K562 (cell line): ENCODE measurements at regions of chr5 and their contacts with region 1.

Region 1: DNA sequence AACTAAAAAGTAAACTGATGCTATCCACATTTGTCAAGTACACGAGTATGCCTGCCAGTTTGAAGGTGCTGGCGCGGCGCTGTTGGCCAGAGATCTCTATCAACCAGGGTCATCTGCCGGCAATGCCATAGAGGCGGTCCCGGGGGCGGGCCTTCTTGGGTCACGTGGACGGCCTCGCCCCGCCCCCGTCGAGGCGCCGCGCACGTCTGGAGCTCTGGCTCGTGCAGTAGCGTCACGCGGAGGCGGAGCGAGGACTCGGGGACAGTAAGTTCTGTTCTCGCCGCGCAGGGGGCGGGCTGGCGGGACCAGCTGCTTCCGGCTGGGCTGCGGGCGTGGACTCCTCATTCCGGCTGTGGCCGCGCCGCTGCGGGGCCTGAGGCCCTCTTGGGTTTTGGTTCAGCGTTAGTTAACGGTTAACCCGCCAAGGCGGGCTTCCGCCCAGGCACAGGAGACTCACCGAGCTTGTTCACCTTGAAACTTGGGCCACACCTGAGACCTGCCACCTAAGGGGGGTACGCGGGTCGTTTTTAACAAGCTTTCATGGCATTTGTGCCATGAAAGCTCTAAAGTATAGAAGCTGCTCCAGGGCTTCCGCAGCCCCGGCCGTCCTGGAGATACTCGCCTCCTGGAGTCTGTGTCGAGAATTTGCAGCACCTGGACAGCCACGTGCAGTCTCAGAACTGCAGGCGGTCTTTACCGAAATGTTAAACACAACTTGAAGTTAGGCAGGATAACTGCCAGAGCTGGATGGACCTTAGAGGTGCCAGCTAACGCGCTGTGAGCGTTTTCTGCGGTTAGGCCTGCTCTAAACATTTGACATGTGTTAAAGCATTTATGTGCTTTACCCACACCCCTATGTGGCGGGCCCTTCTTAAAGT is at the start of gene RFESD:
- DNase-seq: peak; percentile 92 to 99 (median 94)
- ATAC-seq: peak; percentile 89
- H3K4me3 ChIP-seq: peak within 1 kb of the TSS; percentile 49
- H3K27ac ChIP-seq: peak within 1 kb of the TSS; percentile 95
- H3K4me1 ChIP-seq: peaks cover 13 to 18% of the 10 kb centered on the region in 2 experiments
- H3K27me3 ChIP-seq: no peaks in the 10 kb centered on the region
- CTCF ChIP-seq: peak in 1 of 3 experiments; percentile 27; a peak in 2 of 6 replicates
- EP300 ChIP-seq: peak; percentile 52; the same call in 1 of the 2 replicates
- POLR2A ChIP-seq: peak; percentile 95
- RAD21 ChIP-seq: no peak; a peak in 2 of 4 replicates
- polyA plus RNA-seq, gene RFESD: 506 to 600 TPM

Region 2: GRCh38 chr5:94968507-94969095 is 678.2 kb before region 1 on chr5:
- CTCF ChIA-PET with region 1: no interaction called
- POLR2A ChIA-PET with region 1: no interaction called
- in situ Hi-C with region 1: no loop called
- intact Hi-C with region 1: loop called (anchors 10 kb)
- DNase-seq: peak; percentile 11 to 61 (median 22)
- ATAC-seq: peak; percentile 93
- H3K4me3 ChIP-seq: no peak overlapping the region
- H3K27ac ChIP-seq: no peak overlapping the region
- H3K4me1 ChIP-seq: no peaks in the 10 kb centered on the region
- H3K27me3 ChIP-seq: no peaks in the 10 kb centered on the region
- CTCF ChIP-seq: peak; percentile 54 to 75 (median 71)
- EP300 ChIP-seq: no peak
- POLR2A ChIP-seq: no peak
- RAD21 ChIP-seq: peak; percentile 67 to 80

Region 3: DNA sequence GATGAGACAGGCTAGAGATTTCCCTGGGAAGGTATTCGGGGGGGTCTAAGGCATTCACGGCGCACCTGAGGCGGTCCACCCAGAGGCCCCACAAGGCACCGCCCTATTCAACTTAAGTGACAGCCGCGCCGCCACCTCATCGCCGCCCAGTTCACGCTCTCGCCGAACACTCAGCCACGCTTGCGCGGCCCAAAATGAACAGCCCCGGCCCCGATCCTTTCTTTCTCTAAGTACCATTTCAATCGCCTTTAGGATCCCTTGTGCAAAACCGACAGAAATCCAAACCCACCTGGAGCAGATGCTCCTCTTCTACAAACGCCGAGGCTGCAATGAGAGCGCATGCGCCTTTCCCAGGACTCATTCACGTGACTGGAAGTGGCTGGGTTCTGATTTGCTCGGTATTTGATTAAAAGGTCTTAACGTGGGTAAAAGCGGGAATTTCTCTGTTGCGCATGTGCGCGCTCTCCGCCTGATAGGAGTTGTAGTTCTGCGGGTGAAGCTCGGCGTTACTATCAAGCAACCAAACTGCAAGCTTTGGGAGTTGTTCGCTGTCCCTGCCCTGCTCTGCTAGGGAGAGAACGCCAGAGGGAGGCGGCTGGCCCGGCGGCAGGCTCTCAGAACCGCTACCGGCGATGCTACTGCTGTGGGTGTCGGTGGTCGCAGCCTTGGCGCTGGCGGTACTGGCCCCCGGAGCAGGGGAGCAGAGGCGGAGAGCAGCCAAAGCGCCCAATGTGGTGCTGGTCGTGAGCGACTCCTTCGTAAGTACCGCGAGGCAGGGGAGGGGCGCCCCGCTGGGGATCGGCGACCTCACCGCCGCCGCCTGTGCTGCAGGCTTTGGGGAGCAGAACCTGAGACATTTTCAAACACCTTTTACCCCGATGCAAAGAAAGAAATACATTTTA is 91.9 kb before region 1 on chr5 and contains the starts of genes ARSK and SKIC3:
- CTCF ChIA-PET with region 1: interaction called, 4 read pairs
- POLR2A ChIA-PET with region 1: interaction called, 4 read pairs
- in situ Hi-C with region 1: no loop called
- intact Hi-C with region 1: loop called (anchors 1 kb)
- DNase-seq: peak; percentile 86 to 98 (median 92)
- ATAC-seq: peak; percentile 92
- H3K4me3 ChIP-seq: peak within 1 kb of the TSS; percentile 66
- H3K27ac ChIP-seq: peak within 1 kb of the TSS; percentile 84
- H3K4me1 ChIP-seq: peaks cover 7 to 15% of the 10 kb centered on the region in 2 experiments; a peak in 4 of 5 replicates
- H3K27me3 ChIP-seq: no peaks in the 10 kb centered on the region
- CTCF ChIP-seq: peak; percentile 23 to 49 (median 31)
- EP300 ChIP-seq: no peak; the same call in 1 of the 2 replicates
- POLR2A ChIP-seq: peak; percentile 91
- RAD21 ChIP-seq: peak; percentile 35 to 40; a peak in 2 of 4 replicates
- polyA plus RNA-seq, gene ARSK: 2.7 to 2.8 TPM
- polyA plus RNA-seq, gene SKIC3: 35.1 to 44.1 TPM

Region 4: DNA sequence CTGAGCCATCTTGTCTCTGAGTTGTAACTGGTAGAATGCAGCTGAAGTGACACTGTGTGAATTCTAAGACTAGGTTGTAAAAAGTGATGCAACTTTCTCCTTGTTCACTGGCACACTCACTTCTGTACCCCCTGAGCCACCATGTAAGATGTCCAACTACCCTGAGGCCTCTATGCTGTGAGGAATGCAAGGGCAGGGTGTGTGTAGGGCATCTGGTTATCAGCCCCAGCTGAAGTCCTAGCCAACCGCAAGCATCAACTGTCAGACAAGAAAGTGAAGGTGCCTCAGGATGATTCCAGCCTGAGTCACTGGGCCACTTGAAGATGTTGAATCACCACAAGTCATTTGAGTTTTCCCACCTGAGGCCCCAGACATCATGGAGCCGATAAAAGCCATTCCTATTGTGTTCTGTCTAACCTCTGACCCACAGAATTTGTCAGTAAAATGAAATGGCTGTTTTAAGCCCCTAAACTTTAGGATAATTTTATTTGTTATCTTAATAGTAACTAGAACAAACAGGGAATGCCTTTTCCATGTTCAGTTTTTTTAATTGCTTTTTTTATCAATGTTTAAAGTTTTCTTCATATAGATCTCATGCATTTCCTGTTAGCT is 65.7 kb after region 1 on chr5:
- CTCF ChIA-PET with region 1: no interaction called
- POLR2A ChIA-PET with region 1: interaction called, 3 read pairs
- in situ Hi-C with region 1: no loop called
- intact Hi-C with region 1: loop called (anchors 5 kb)
- DNase-seq: peak; percentile 82 to 97 (median 87)
- ATAC-seq: peak; percentile 87
- H3K4me3 ChIP-seq: peak overlapping the region; percentile 51; the same call in 1 of the 2 replicates
- H3K27ac ChIP-seq: peak overlapping the region; percentile 99
- H3K4me1 ChIP-seq: peaks cover 25 to 63% of the 10 kb centered on the region in 2 experiments
- H3K27me3 ChIP-seq: no peaks in the 10 kb centered on the region
- CTCF ChIP-seq: no peak
- EP300 ChIP-seq: peak; percentile 100
- POLR2A ChIP-seq: peak; percentile 83
- RAD21 ChIP-seq: peak in 1 of 2 experiments; percentile 37; a peak in 2 of 4 replicates

Region 5: GRCh38 chr5:95781101-95781583 is 134.3 kb after region 1 on chr5:
- CTCF ChIA-PET with region 1: interaction called, 5 read pairs
- POLR2A ChIA-PET with region 1: no interaction called
- in situ Hi-C with region 1: no loop called
- intact Hi-C with region 1: loop called (anchors 1 kb)
- DNase-seq: peak in 3 of 4 experiments; percentile 35 to 79 (median 59)
- ATAC-seq: peak; percentile 97
- H3K4me3 ChIP-seq: no peak overlapping the region
- H3K27ac ChIP-seq: no peak overlapping the region
- H3K4me1 ChIP-seq: no peaks in the 10 kb centered on the region; a peak in 1 of 5 replicates
- H3K27me3 ChIP-seq: no peaks in the 10 kb centered on the region
- CTCF ChIP-seq: peak; percentile 84 to 97 (median 92)
- EP300 ChIP-seq: no peak
- POLR2A ChIP-seq: no peak; the same call in 1 of the 2 replicates
- RAD21 ChIP-seq: peak; percentile 89 to 93

Region 6: DNA sequence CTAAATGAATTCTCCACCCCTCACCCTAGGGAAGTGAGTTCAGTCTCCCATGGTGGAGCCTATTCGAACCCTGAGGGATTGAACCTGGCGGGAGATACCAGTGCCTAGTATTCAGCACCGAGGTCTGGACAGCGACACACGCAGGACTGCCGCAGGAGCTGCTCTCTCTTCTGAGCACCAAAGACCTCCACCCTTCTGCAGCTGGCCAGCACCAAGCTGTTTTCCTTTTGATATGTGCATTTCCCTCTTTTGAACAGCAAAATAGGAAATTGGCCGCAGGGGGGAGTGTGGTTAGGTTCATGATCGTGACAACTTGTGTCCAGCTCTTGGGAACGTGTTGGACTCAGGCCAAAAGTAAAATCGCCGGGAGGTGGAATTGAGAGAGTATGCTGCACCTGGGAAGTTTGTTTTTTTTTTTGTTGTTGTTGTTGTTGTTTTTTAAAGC is 787.4 kb after region 1 on chr5:
- CTCF ChIA-PET with region 1: no interaction called
- POLR2A ChIA-PET with region 1: no interaction called
- in situ Hi-C with region 1: no loop called
- intact Hi-C with region 1: no loop called
- DNase-seq: peak; percentile 37 to 59 (median 48)
- ATAC-seq: peak; percentile 92
- H3K4me3 ChIP-seq: no peak overlapping the region
- H3K27ac ChIP-seq: no peak overlapping the region
- H3K4me1 ChIP-seq: no peaks in the 10 kb centered on the region
- H3K27me3 ChIP-seq: peaks cover 2 to 20% of the 10 kb centered on the region in 2 experiments; a peak in 3 of 5 replicates
- CTCF ChIP-seq: no peak
- EP300 ChIP-seq: no peak
- POLR2A ChIP-seq: no peak
- RAD21 ChIP-seq: no peak